PC-3 (cell line): ENCODE measurements at regions of chr11 and their contacts with region 1.

Region 1: GRCh38 chr11:19240420-19241259 is at the start of gene E2F8:
- DNase-seq: peak; percentile 97
- ATAC-seq: peak; percentile 87
- H3K4me3 ChIP-seq: peak within 1 kb of the TSS; percentile 90
- H3K27ac ChIP-seq: peak within 1 kb of the TSS; percentile 77
- H3K4me1 ChIP-seq: peaks cover 54% of the 10 kb centered on the region
- H3K27me3 ChIP-seq: no peaks in the 10 kb centered on the region
- CTCF ChIP-seq: no peak
- total RNA-seq, gene E2F8: 11.9 and 12.3 TPM in 2 replicates

Region 2: DNA sequence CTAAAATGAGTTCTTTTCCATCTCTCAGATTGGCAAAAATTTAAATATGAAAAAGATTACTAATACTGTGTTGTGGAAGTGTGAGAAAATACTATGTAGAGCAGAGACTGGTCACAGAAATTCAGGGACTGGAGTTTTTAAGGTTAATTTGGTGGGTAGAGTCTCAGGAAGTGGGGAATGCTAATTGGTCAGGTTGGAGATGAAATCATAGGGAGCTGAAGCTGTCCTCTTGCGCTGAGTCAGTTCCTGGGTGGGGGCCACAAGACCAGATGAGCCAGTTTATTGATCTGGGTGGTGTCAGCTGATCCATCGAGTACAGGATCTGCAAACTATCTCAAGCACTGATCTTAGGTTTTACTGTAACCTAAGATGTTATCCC is 571.4 kb before region 1 on chr11:
- CTCF ChIA-PET with region 1: no interaction called
- POLR2A ChIA-PET with region 1: interaction called, 10 read pairs
- intact Hi-C with region 1: no loop called
- DNase-seq: peak; percentile 71
- ATAC-seq: peak; percentile 79
- H3K4me3 ChIP-seq: peak overlapping the region; percentile 36; the same call in 1 of the 2 replicates
- H3K27ac ChIP-seq: peak overlapping the region; percentile 87
- H3K4me1 ChIP-seq: peaks cover 44% of the 10 kb centered on the region
- H3K27me3 ChIP-seq: no peaks in the 10 kb centered on the region
- CTCF ChIP-seq: no peak

Region 3: DNA sequence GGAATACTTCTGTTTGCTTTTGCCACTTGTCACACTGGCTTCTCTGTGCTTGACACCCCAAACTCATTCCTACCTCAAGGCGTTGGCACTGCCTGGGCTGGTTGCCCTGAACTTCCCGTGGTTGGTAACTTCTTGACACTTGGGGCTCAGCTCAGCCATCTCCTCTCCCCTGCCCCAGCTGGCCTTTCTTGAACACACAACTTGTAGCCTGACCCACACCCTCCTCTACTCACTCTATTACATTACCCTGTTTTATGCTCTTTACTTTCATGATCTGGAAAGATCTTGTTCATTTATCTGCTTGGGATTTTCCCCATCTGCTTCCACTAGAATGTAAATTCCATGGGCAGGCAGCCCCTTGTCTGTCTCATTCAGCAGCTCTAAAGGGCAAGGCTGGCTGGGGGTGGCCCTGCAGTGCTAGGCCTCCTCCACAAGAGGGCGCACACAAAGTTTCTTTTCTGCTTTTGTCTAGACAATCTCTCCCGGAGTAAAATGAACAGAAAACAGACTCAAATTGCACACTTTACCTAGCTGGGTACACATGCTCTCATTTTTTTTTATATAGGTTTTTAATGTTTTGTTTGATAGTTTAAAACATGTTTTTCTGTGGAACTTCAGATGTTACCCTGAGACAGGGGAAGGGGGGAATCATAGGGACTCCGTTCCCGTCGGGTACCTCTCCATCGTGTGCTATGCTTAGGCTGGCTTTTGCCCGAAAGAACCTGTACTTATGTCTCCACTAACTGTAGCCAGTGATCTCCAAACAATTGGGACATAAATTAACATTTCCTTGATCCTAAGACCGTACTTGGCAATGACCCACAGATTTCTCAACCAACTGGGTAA is 163.7 kb before region 1 on chr11:
- CTCF ChIA-PET with region 1: interaction called, 3 read pairs
- POLR2A ChIA-PET with region 1: interaction called, 5 read pairs
- intact Hi-C with region 1: loop called (anchors 5 kb)
- DNase-seq: peak; percentile 75
- ATAC-seq: peak; percentile 41
- H3K4me3 ChIP-seq: peak overlapping the region; percentile 45
- H3K27ac ChIP-seq: peak overlapping the region; percentile 35
- H3K4me1 ChIP-seq: peaks cover 52% of the 10 kb centered on the region
- H3K27me3 ChIP-seq: no peaks in the 10 kb centered on the region
- CTCF ChIP-seq: peak; percentile 94

Region 4: GRCh38 chr11:19116971-19117750 is 123.5 kb before region 1 on chr11 and contains the start of gene ZDHHC13:
- CTCF ChIA-PET with region 1: no interaction called
- POLR2A ChIA-PET with region 1: no interaction called
- intact Hi-C with region 1: loop called (anchors 2 kb)
- DNase-seq: peak; percentile 95
- ATAC-seq: peak; percentile 97
- H3K4me3 ChIP-seq: peak within 1 kb of the TSS; percentile 76
- H3K27ac ChIP-seq: peak within 1 kb of the TSS; percentile 61
- H3K4me1 ChIP-seq: peaks cover 35% of the 10 kb centered on the region
- H3K27me3 ChIP-seq: no peaks in the 10 kb centered on the region
- CTCF ChIP-seq: peak; percentile 62
- total RNA-seq, gene ZDHHC13: 13.5 and 21.2 TPM in 2 replicates

Region 5: DNA sequence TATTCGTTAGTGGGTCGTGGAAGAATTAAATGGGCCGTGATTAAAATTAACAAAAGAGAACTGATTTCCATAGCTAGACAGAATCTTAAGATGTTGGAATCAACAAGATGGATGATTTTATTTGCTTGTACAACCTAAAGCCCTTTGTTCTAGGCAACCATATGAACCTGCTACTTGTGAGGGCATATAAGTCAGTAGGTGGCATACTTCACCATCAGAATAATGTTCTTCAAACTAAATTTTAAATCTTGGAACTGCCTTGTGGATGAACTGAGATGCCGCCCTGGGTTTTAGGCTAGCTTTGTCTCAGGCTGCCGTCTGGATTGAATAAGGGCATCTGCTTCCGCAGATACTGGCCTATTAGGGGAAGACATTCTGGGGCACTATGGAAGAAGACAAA is 79.8 kb before region 1 on chr11:
- CTCF ChIA-PET with region 1: no interaction called
- POLR2A ChIA-PET with region 1: no interaction called
- intact Hi-C with region 1: loop called (anchors 2 kb)
- DNase-seq: peak; percentile 11
- ATAC-seq: peak; percentile 48
- H3K4me3 ChIP-seq: no peak overlapping the region
- H3K27ac ChIP-seq: no peak overlapping the region
- H3K4me1 ChIP-seq: no peaks in the 10 kb centered on the region
- H3K27me3 ChIP-seq: no peaks in the 10 kb centered on the region
- CTCF ChIP-seq: peak; percentile 35; the same call in 1 of the 2 replicates